ENCODE measurements at regions of chr13 and their contacts with region 1.

Region 1: GRCh38 chr13:106471957-106472543 is 63.4 kb downstream of the EFNB2 start:
- DNase-seq: peak; percentile 35
- H3K4me3 Mint-ChIP-seq: peak overlapping the region; percentile 61
- H3K27ac Mint-ChIP-seq: peak overlapping the region; percentile 74
- H3K4me1 Mint-ChIP-seq: peaks cover 8% of the 10 kb centered on the region
- H3K27me3 Mint-ChIP-seq: no peaks in the 10 kb centered on the region
- CTCF ChIP-seq: no peak

Region 2: DNA sequence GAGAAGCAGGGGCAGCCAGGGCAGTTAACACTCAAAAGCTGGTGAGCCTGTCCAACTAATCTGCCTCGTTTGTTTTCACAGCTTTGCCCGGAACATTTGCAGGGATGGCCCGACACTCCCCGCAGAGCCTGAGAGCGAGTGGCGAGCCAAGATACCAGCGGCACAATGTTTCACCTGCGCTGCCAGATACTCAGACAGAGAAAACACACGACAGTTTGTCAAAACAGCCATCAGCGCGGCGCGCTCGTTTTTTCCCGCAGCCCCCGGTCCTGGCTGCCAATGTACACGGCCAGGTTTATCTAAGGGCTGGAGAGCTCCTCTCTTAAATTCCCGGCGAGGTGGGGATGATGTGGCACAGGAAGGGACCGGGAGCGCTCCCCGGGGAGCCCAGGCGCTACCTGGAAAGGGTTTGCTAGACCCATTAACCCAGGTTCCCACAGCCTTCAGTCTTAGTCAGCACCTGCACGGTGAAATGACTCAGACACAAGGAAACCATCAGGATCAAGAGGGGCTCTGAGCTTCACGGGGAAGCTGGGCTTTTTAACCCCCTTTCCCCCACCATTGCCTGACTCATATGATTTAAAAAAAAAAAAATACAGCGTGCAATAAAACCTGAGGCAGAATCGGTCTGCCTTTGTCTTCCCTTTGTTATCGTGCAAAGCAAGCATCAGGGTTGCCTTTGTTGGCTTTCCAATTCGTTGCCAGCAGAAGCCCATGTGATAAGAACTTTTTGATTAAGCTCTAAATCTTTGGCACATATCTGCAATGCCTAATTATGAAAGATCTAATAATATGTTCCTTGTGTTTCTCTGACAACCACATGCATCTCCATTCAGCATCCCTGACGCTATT is 122.7 kb before region 1 on chr13:
- CTCF ChIA-PET with region 1: interaction called, 3 read pairs
- intact Hi-C with region 1: loop called (anchors 10 kb)
- DNase-seq: peak; percentile 15
- H3K4me3 Mint-ChIP-seq: peak overlapping the region; percentile 69
- H3K27ac Mint-ChIP-seq: no peak overlapping the region
- H3K4me1 Mint-ChIP-seq: no peaks in the 10 kb centered on the region
- H3K27me3 Mint-ChIP-seq: no peaks in the 10 kb centered on the region
- CTCF ChIP-seq: no peak

Region 3: DNA sequence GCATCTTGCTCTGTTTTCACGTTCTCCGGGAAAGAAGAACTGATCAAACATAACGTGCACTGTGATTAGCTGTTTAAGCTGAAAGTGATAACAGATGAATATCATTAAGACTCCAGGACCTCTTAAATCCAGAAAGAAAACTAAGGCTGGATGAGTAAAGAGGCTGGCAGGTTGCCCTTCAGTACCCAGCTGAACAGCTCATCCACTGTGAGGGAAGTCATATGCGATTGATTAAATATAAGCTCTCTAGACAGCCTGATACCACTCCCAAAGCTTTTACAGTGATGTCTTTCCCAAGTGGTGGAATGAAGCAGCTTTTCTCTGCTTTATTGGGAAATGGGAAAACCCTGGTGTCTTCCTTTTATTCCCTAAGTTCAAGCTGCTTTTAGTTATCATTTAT is 53.5 kb before region 1 on chr13:
- CTCF ChIA-PET with region 1: no interaction called
- intact Hi-C with region 1: no loop called
- DNase-seq: no peak
- H3K4me3 Mint-ChIP-seq: no peak overlapping the region
- H3K27ac Mint-ChIP-seq: no peak overlapping the region
- H3K4me1 Mint-ChIP-seq: no peaks in the 10 kb centered on the region
- H3K27me3 Mint-ChIP-seq: no peaks in the 10 kb centered on the region
- CTCF ChIP-seq: no peak